CD8-positive, alpha-beta memory T cell (primary cell): ENCODE measurements at regions of chr6 and their contacts with region 1.

Region 1: DNA sequence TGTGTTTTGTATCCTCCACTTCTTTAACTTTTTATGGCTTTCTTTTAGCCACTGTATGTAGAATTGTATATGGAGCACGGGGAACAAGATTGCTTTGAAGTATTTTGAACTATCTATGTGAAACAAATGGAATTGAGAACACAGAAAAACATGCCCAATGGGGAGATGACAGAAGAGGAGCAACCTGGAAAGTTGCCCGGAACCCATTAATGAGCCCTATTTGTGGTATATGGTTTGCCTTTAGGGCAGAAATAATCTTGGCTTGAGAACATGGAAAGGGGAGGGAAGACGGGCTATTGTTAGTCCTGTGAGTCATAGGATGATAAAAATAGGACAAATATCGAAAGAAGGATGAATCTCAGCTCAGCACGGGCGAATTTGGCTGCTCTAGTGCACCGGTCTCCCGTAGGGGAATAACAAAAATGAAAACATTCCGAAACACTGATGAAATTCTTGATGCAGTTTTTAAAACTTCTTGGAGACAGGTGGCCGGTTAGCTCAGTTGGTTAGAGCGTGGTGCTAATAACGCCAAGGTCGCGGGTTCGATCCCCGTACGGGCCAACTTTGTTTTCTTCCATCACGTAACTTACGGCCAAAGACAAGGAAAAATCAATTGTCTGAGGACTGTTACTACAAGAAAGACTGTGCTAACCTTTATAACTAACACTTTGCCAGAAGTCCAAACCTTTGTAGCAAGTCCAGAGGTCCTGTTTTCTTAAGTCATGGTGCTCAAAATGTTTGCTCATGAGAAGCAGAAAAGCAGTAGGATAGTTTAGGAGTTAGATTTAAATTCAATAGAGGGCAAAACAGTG is 15.7 kb downstream of the HMGN4 start:
- DNase-seq: peak; percentile 49 to 84 (median 82)
- H3K4me3 ChIP-seq: peak overlapping the region; percentile 89
- H3K4me3 Mint-ChIP-seq: no peak overlapping the region
- H3K27ac ChIP-seq: peak overlapping the region; percentile 64
- H3K27ac Mint-ChIP-seq: no peak overlapping the region
- H3K4me1 ChIP-seq: peaks cover 11% of the 10 kb centered on the region
- H3K4me1 Mint-ChIP-seq: peaks cover 20 to 31% (median 29%) of the 10 kb centered on the region in 3 donors
- H3K27me3 ChIP-seq: no peaks in the 10 kb centered on the region
- H3K27me3 Mint-ChIP-seq: peaks cover 0 to 4% of the 10 kb centered on the region in 2 donors

Region 2: GRCh38 chr6:26568601-26569432 is 15.0 kb after region 1 on chr6:
- CTCF ChIA-PET with region 1: interaction called, 40 read pairs
- POLR2A ChIA-PET with region 1: interaction called, 20 read pairs
- DNase-seq: peak; percentile 95 to 99 (median 96)
- H3K4me3 ChIP-seq: peak overlapping the region; percentile 89
- H3K4me3 Mint-ChIP-seq: peak overlapping the region; percentile 91 to 97 (median 96)
- H3K27ac ChIP-seq: peak overlapping the region; percentile 75
- H3K27ac Mint-ChIP-seq: peak overlapping the region; percentile 89 to 99 (median 98)
- H3K4me1 ChIP-seq: peaks cover 6% of the 10 kb centered on the region
- H3K4me1 Mint-ChIP-seq: peaks cover 23 to 36% (median 29%) of the 10 kb centered on the region in 3 donors
- H3K27me3 ChIP-seq: no peaks in the 10 kb centered on the region
- H3K27me3 Mint-ChIP-seq: peaks cover 3 to 19% of the 10 kb centered on the region in 2 donors